Cardiac septum (tissue), 1 donor: ENCODE measurements at regions of chr22 and their contacts with region 1.

Region 1: GRCh38 chr22:46087336-46088277 is 62.7 kb upstream of the PPARA start:
- DNase-seq: peak; percentile 93

Region 2: DNA sequence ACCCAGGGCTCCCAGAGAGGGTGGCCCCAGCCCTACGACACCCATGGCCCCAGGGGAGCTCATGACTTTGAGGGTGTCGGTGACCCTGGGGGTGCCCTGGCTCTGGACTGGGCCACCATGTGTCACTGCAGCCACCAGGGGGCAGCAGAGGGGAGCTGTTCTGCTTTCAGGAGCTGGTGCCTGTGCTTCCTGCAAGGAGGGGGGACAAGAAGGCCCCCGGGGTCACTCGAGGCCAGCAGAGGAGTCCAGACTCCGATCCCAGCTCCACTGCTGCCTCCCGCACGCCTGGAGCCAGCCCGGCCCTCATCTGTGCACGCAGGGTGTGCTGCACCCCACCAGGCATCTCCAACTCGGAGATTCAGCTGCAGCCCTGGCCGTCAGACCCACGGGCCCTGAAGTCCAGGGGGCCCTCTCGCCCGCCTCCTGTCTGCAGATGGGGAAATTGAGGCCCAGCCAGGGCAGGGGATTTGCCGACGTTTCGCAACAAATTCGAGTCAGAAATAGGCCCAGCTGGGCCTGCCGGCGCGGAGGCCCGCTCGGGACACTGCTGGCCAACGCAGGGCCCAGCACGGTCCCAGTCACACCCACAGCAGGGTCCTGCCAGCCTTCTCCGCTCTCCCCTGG is 81.1 kb before region 1 on chr22:
- intact Hi-C with region 1: loop called (anchors 5 kb)
- DNase-seq: peak; percentile 96

Region 3: GRCh38 chr22:46054091-46055073 is 33.2 kb before region 1 on chr22:
- intact Hi-C with region 1: loop called (anchors 5 kb)
- DNase-seq: peak; percentile 85

Region 4: GRCh38 chr22:46108564-46109473 is 21.2 kb after region 1 on chr22:
- intact Hi-C with region 1: loop called (anchors 2 kb)
- DNase-seq: no peak